Breast epithelium (tissue), 4 donors: ENCODE measurements at regions of chr4 and their contacts with region 1.

Region 1: DNA sequence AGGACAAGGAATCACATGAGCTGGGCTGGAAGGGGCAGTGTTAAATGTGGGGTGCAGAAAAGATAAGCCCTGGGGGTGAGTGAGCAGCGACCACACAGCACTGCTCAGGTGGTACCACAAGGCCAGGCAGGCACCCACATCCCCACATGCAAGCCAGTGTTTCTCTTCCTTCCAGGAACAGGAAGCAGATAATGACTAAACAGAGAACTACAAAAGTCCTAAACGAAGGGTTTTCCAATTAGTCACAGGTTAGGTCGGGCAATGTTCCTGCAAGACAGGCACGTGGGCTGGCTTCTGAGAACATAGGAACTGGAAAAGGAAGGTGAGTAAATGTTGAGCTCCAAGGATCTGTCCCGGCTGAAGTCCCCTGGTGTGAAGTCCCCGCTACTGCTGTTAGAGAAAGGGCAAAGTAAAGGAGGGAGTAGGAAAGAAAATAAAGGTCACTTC is 19.5 kb downstream of the RELL1 start:
- DNase-seq: peak in 1 of 2 donors; percentile 42
- H3K4me3 ChIP-seq: no peak overlapping the region
- H3K27ac ChIP-seq: peak overlapping the region; percentile 62 to 87
- H3K4me1 ChIP-seq: peaks cover 0 to 14% of the 10 kb centered on the region in 2 donors
- H3K27me3 ChIP-seq: no peaks in the 10 kb centered on the region
- CTCF ChIP-seq: peak in 1 of 3 donors; percentile 29
- POLR2A ChIP-seq: no peak

Region 2: DNA sequence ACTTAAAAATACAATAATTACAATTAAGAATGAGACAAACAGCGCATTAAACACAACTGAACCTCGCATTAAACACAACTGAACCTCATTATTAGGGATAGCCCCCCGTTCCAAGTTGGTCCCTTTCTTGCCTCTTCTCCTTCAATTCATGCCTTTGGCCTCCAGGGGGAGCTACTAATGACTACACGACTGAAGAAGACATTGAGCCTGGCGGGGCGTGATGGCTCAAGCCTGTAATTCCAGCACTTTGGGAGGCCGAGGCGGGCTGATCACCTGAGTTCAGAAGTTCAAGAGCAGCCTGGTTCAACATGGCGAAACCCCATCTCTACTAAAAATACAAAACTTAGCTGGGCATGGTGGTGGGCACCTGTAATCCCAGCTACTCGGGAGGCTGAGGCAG is 478.5 kb before region 1 on chr4:
- intact Hi-C with region 1: no loop called
- DNase-seq: no peak
- H3K4me3 ChIP-seq: no peak overlapping the region
- H3K27ac ChIP-seq: no peak overlapping the region
- H3K4me1 ChIP-seq: no peaks in the 10 kb centered on the region
- H3K27me3 ChIP-seq: no peaks in the 10 kb centered on the region
- CTCF ChIP-seq: no peak
- POLR2A ChIP-seq: no peak

Region 3: DNA sequence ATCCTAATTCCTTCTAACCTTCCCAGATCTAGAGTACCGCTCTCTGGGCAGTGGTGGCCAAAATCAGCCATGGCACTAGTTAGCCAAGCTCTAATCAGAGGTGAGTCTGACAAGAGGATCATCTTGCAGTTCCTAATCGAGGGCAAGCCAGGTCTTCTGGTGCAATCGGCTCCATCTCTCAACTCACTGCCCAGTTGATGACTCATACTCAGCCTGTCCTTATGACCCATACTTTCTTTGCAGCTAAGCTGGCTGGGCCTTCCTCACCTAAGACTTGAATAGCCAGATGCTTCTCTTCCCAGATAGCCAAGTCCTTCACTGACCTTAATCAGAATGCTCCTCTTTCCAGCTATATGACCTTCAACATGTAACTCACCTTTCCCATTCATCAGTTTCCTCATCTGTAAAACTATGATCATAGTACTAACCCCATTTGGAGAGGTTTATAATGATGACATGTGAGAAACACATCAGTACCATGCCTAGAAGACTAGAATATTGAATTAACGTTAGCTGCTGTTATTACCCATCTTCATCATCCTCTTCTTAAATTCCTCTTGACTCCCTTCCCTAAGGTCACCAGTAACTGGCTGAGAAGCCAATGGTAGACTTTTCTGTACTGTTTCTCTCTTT is 37.6 kb before region 1 on chr4:
- intact Hi-C with region 1: no loop called
- DNase-seq: peak in 1 of 2 donors; percentile 27
- H3K4me3 ChIP-seq: no peak overlapping the region
- H3K27ac ChIP-seq: peak overlapping the region; percentile 54 to 57
- H3K4me1 ChIP-seq: no peaks in the 10 kb centered on the region
- H3K27me3 ChIP-seq: no peaks in the 10 kb centered on the region
- CTCF ChIP-seq: no peak
- POLR2A ChIP-seq: no peak

Region 4: GRCh38 chr4:37644962-37645361 is 21.7 kb before region 1 on chr4:
- intact Hi-C with region 1: loop called (anchors 2 kb)
- DNase-seq: no peak
- H3K4me3 ChIP-seq: no peak overlapping the region
- H3K27ac ChIP-seq: peak overlapping the region in 1 of 2 donors; percentile 8
- H3K4me1 ChIP-seq: no peaks in the 10 kb centered on the region
- H3K27me3 ChIP-seq: no peaks in the 10 kb centered on the region
- CTCF ChIP-seq: no peak
- POLR2A ChIP-seq: no peak

Region 5: GRCh38 chr4:37936889-37937498 is 270.3 kb after region 1 on chr4:
- intact Hi-C with region 1: no loop called
- DNase-seq: peak in 1 of 2 donors; percentile 23
- H3K4me3 ChIP-seq: no peak overlapping the region
- H3K27ac ChIP-seq: no peak overlapping the region
- H3K4me1 ChIP-seq: no peaks in the 10 kb centered on the region
- H3K27me3 ChIP-seq: no peaks in the 10 kb centered on the region
- CTCF ChIP-seq: no peak
- POLR2A ChIP-seq: no peak

Region 6: GRCh38 chr4:38710053-38710452 is 1043.4 kb after region 1 on chr4:
- intact Hi-C with region 1: no loop called
- DNase-seq: no peak
- H3K4me3 ChIP-seq: no peak overlapping the region
- H3K27ac ChIP-seq: no peak overlapping the region
- H3K4me1 ChIP-seq: no peaks in the 10 kb centered on the region
- H3K27me3 ChIP-seq: no peaks in the 10 kb centered on the region
- CTCF ChIP-seq: no peak
- POLR2A ChIP-seq: no peak